Activated CD8-positive, alpha-beta memory T cell treated with anti-CD3 and anti-CD28 coated beads, Interleukin-2, amount 10 ng/mL, durations not matched to agents 7 days and 5 days (primary cell): ENCODE measurements at regions of chr1 and their contacts with region 1.

Region 1: DNA sequence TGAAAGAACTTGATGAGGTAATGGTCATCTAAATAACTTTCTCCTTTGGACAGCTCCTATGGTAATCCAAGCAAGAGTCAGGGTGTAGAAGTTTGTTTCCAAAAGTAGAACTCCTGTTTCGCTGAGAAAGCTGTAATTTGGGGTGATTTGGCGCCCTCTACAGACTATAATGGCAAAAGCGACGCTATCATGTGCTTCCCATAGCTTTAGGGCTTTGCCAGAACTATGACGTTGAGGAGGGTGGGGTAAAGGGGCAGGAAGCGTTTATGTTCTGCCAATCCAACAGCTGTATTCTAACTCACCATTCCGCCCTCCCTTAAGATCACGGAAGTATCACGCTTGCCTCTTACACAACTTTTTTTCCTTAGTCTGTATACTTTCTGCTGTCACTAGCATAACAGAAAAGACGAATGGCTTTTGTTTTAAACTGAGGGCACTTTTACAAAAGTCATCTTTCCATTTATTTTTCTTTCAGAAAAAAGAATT is at the start of gene FMO4:
- DNase-seq: peak; percentile 92
- ATAC-seq: peak; percentile 100
- H3K4me3 Mint-ChIP-seq: peak within 1 kb of the TSS; percentile 69
- H3K27ac Mint-ChIP-seq: peak within 1 kb of the TSS; percentile 78
- H3K4me1 Mint-ChIP-seq: peaks cover 15% of the 10 kb centered on the region
- H3K27me3 Mint-ChIP-seq: no peaks in the 10 kb centered on the region
- total RNA-seq, gene FMO4: 0.91 to 1.5 TPM

Region 2: DNA sequence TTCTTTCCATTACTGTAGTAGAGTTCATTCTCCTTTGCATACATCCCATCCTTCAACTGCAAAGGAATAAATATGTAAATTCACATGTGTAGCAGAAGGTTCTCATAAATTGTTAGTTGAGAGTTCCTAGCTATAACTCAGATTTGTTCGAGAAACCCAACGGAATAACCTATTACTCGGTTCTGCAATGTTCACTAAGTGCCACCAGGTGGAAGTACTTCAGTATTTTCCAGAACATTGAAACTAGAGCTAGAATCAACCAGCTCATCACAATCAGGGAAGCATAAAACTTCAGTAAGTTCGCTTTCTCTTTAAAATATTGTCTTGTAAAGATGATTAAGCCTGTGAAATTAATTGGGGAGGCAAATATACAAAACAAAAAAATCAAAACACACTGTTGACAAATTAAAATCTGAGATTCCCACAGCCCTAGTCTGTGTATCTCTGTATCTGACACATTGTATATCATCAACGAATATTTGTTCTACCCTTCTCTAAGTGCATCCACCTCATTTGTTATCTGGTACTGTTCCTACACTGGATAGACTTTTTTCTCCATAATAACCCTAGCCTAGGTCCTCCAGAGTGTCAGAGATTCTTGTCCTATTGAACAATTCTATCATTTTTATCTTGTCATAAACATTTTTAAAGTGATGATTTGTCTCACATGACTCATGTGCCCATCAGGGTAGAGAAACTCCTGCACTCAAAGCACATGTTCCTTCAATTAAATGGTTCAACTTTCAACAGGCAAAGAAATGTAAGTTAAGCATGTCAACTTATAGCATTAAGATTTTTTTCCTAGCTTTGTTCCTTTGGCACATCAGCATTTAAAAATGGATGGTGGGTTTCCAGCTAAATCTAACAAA is 346.6 kb before region 1 on chr1:
- CTCF ChIA-PET with region 1: interaction called, 16 read pairs
- DNase-seq: no peak
- ATAC-seq: no peak
- H3K4me3 Mint-ChIP-seq: no peak overlapping the region
- H3K27ac Mint-ChIP-seq: no peak overlapping the region
- H3K4me1 Mint-ChIP-seq: no peaks in the 10 kb centered on the region
- H3K27me3 Mint-ChIP-seq: peaks cover 28% of the 10 kb centered on the region

Region 3: GRCh38 chr1:171081314-171081753 is 232.5 kb before region 1 on chr1:
- CTCF ChIA-PET with region 1: interaction called, 16 read pairs
- DNase-seq: no peak
- ATAC-seq: no peak
- H3K4me3 Mint-ChIP-seq: no peak overlapping the region
- H3K27ac Mint-ChIP-seq: no peak overlapping the region
- H3K4me1 Mint-ChIP-seq: no peaks in the 10 kb centered on the region
- H3K27me3 Mint-ChIP-seq: no peaks in the 10 kb centered on the region

Region 4: DNA sequence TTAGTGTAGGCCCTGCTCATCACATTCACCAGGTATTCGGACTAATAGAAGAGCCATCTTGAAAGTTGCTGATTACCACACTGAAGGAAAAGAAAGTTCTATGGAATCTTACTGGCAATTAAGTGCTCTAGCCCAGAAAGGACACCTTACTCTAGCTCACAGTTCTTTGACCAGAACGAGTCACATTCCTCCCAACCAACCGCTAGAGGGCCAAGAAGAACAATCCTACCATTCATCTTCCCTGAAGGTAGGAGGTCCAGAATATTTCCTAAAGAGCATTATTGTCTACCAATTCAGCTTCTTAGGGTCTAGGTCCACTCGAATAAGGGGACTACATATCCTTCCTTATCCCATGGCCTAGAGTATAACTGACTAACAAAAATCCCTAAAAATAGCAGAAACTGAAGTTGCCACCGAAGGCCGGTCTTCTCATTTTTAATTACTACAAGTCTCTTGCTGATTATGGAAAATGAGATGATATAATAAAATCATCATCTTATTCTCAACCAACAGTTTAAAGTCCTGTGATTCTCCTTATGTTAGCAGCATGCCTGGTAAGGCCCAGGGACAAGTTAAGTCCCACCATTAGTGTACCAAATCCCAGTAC is 68.3 kb before region 1 on chr1:
- CTCF ChIA-PET with region 1: interaction called, 26 read pairs
- DNase-seq: no peak
- ATAC-seq: peak; percentile 64
- H3K4me3 Mint-ChIP-seq: no peak overlapping the region
- H3K27ac Mint-ChIP-seq: no peak overlapping the region
- H3K4me1 Mint-ChIP-seq: no peaks in the 10 kb centered on the region
- H3K27me3 Mint-ChIP-seq: peaks cover 52% of the 10 kb centered on the region

Region 5: DNA sequence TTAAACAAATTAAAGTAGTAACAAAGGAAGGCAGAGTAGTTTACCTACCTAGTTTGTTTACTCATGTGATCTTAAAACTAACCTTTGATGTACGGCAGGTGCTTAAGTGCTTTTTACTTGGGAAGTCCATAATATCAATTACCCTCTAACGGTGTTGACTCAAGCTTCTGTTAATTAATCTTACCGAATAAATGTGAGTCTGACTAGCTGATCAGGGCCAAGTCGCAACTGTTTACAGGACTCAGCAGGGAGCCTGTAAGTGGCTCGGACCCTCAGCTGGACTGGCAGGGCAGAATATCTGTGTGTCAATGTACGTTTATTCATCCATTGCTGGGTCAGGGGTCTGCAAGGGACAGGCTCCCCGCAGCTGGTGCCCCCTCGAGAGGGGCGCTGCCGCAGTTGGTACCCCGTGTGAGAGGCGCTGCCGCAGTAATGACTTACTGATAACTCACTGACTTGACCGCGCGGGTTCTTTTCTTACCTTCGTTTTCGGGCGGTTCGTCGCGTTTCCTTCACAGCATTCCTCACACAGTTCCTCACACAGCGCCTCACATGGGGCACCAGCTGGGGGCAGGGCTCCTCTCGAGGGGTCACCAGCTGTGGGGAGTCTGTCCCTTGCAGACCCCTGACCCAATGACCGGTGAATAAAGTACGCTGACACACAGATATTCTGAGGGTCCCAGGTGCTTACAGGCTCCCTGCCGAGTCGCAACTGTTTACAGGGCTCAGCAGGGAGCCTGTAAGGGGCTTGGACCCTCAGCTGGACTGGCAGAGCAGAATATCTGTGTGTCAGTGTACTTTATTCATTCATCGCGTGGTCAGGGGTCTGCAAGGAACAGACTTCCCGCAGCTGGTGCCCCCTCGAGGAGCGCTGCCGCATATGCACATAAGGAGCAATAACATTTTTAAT is 62.6 kb before region 1 on chr1:
- CTCF ChIA-PET with region 1: interaction called, 26 read pairs
- DNase-seq: peak; percentile 52
- ATAC-seq: peak; percentile 72
- H3K4me3 Mint-ChIP-seq: peak overlapping the region; percentile 75
- H3K27ac Mint-ChIP-seq: no peak overlapping the region
- H3K4me1 Mint-ChIP-seq: peaks cover 17% of the 10 kb centered on the region
- H3K27me3 Mint-ChIP-seq: peaks cover 53% of the 10 kb centered on the region

Region 6: DNA sequence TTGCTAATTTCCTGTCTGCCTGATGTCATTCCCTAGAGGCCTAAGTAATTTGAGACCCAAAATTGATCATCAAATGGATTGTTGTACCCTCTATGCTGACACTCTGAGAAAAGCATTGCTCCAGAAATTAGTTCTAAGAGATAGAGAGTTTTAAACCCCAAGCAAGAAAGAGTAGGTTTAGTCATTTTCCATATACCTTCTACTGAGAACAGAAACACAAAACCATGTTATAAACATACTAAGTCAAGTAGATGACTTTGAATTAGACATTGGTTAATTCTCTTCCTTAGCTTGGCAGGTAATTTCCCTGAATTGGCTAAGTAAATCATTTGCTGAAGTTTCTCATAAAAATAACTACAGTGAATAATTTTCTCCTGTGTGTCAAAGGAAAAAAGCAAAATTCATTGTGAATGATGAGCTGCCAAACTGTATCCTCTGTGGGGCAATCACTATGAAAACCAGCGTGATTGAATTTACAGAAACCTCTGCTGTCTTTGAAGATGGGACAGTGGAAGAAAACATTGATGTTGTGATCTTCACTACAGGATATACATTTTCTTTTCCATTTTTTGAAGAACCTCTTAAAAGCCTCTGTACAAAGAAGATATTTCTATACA is 20.3 kb after region 1 on chr1:
- CTCF ChIA-PET with region 1: no interaction called
- DNase-seq: no peak
- ATAC-seq: no peak
- H3K4me3 Mint-ChIP-seq: no peak overlapping the region
- H3K27ac Mint-ChIP-seq: no peak overlapping the region
- H3K4me1 Mint-ChIP-seq: no peaks in the 10 kb centered on the region
- H3K27me3 Mint-ChIP-seq: no peaks in the 10 kb centered on the region